Gastrocnemius medialis (tissue), 4 donors: ENCODE measurements at regions of chr5 and their contacts with region 1.

Region 1: DNA sequence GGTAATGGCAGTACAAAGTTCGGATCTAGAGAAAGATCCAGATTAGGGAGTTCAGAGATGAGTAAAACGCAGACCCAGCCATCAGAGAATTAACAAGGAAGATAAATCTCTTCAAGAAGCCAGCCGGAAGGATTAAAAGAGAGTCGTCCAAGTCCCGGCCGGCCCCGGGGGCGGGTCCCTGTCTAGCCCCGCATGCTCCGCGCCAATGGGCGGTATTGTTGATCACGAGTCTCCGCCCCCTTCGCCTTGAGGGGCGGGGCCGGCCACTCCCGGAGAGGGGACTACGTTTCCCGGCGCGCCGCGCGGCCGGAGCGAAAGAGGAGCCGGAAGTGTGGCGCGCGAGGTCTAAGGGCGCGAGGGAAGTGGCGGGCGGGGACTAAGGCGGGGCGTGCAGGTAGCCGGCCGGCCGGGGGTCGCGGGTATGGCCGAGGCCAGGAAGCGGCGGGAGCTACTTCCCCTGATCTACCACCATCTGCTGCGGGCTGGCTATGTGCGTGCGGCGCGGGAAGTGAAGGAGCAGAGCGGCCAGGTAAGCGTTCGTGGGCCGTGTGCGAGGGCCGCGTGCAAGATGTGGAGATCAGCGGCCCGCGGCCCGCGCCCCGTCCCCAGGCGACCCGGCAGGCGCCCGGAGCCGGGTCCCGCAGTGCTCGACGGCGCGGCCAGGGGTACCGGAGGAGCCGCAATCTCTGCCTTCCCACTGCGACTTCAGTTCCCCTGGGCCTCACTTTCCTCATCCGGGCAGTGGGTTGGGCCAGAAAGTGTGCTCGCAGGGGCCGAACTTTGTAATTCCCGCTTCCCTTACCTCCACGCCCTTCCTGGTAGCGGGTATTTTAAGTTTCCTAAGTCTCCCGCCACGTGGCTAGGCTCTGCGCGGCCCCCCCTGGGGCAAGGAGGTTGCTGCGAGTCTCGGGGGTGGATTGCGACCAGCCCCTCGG is at the start of gene TCOF1:
- DNase-seq: peak; percentile 91 to 95
- ATAC-seq: peak; percentile 94
- H3K4me3 ChIP-seq: peak within 1 kb of the TSS; percentile 74 to 92 (median 78)
- H3K27ac ChIP-seq: peak within 1 kb of the TSS; percentile 77 to 85 (median 78)
- H3K4me1 ChIP-seq: peaks cover 12 to 14% of the 10 kb centered on the region in 2 donors
- H3K27me3 ChIP-seq: no peaks in the 10 kb centered on the region
- CTCF ChIP-seq: no peak
- POLR2A ChIP-seq: peak; percentile 60
- total RNA-seq, gene TCOF1: 22.1 to 31.7 (median 27.1) TPM

Region 2: DNA sequence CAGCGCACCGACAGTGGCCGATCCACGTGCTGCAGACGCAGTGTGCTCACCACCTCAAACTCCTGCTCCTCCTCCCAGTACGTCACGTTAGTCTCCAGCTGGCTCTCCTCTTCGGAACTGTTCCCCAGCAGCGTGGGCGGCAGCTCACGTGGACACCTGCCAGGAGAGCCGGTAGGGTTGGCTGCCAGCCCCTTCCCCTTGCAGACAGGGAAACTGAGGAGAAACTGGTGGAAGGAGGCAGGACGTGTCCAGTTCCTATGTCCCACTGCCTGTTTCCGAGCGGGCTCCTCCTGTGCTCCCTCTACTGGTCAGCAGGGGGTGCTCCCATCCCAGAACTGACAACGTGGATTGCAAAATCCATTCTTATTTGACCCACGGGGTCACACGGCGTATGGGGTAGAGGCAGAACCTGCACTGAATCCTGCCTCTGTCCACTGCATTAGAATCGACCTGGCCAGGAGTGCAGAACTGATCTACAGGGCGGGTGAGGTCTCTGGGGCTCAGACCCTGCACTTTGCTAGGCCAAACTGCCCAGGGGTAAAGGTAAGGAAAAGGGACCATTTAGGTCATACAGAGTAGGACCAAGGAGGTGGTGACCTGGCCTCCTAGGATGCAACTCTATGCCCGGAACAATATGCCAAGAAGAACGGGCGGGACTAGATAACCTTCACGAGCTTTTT is 227.6 kb before region 1 on chr5:
- in situ Hi-C with region 1: no loop called
- intact Hi-C with region 1: loop called (anchors 10 kb)
- DNase-seq: peak; percentile 44 to 70
- ATAC-seq: peak; percentile 67 to 91
- H3K4me3 ChIP-seq: peak overlapping the region; percentile 17 to 49 (median 32)
- H3K27ac ChIP-seq: peak overlapping the region in 3 of 4 donors; percentile 25 to 76 (median 30)
- H3K4me1 ChIP-seq: peaks cover 0 to 10% of the 10 kb centered on the region in 2 donors
- H3K27me3 ChIP-seq: no peaks in the 10 kb centered on the region
- CTCF ChIP-seq: peak; percentile 84 to 93 (median 87)
- POLR2A ChIP-seq: no peak

Region 3: DNA sequence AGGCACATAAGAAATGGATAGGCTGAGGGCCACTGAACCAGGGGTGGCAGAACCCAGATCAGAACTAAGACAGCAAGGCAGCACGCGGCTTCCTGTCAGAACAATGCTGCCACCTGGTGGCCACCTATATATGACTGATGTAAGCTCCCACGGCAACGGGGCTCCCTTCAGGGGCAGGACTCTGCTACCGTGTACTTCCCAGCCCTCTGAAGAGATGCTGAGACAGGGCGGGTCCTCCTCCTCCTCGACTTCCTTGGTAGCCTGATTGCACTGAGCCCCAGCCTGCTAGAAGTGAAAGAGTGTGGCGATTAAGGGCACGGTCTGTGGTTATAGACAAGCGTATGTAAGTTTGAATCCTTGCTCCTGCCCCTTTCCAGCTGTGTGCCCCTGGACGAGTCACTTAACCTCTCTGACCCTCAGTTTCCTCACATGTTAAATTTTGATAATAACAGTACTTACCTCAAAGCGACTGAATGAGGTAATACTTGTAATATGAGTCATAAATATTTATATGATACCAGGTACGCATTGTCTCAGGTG is 78.6 kb after region 1 on chr5:
- in situ Hi-C with region 1: no loop called
- intact Hi-C with region 1: loop called (anchors 5 kb)
- DNase-seq: peak; percentile 65 to 82
- ATAC-seq: peak; percentile 86 to 94
- H3K4me3 ChIP-seq: no peak overlapping the region
- H3K27ac ChIP-seq: no peak overlapping the region
- H3K4me1 ChIP-seq: no peaks in the 10 kb centered on the region
- H3K27me3 ChIP-seq: no peaks in the 10 kb centered on the region
- CTCF ChIP-seq: peak; percentile 77 to 91 (median 87)
- POLR2A ChIP-seq: no peak

Region 4: GRCh38 chr5:150458819-150459557 is 101.4 kb after region 1 on chr5:
- in situ Hi-C with region 1: no loop called
- intact Hi-C with region 1: no loop called
- DNase-seq: peak; percentile 29 to 65
- ATAC-seq: peak; percentile 79
- H3K4me3 ChIP-seq: peak overlapping the region in 1 of 4 donors; percentile 29
- H3K27ac ChIP-seq: peak overlapping the region in 3 of 4 donors; percentile 18 to 80 (median 60)
- H3K4me1 ChIP-seq: peaks cover 19 to 23% of the 10 kb centered on the region in 2 donors
- H3K27me3 ChIP-seq: no peaks in the 10 kb centered on the region
- CTCF ChIP-seq: peak; percentile 71 to 96 (median 91)
- POLR2A ChIP-seq: no peak

Region 5: DNA sequence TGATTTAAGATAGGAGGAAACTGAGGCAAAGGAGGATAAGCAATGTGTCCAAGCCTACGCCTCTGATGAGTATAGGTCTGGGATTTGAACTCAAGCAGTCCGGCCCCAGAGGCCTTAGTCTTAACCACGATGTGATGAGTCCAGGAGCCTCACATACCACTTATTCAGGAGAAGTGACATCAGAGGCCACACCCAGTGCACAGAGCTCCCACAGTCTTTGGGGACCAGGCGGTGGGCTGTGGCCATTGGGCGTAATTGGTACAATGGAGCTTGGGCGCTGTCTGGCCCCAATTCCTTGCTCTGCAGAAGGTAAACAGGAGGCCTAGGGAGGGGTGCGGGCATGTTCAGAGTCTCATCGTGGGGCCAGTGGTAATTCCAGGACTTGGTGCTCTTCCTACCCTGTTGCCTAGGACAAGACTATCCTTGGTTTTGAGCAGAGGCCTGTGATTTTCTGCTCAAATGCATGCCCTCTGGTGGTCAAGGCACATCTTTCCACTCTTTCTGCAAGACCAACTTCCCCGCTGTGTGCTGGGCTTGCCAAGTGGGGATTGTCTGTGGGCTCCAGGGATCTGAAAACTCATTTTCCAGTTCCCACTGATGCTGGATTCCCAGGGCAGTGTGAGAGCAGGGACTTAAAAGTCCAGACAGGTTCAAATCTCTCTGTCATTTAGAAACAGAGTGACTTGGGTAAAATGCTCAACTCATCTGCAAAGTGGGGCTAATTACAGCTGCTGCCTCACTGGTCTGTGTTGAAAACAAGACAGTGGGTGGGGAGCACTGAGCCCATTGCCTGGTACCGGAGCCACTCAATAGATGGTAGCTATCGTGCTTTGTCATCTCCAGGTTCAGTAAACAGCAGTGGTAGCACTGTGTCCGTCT is 166.1 kb after region 1 on chr5:
- in situ Hi-C with region 1: no loop called
- intact Hi-C with region 1: no loop called
- DNase-seq: peak in 1 of 2 donors; percentile 46
- ATAC-seq: peak; percentile 42 to 58
- H3K4me3 ChIP-seq: no peak overlapping the region
- H3K27ac ChIP-seq: peak overlapping the region; percentile 21 to 79 (median 75)
- H3K4me1 ChIP-seq: peaks cover 55 to 62% of the 10 kb centered on the region in 2 donors
- H3K27me3 ChIP-seq: no peaks in the 10 kb centered on the region
- CTCF ChIP-seq: peak; percentile 52 to 70 (median 62)
- POLR2A ChIP-seq: no peak

Region 6: DNA sequence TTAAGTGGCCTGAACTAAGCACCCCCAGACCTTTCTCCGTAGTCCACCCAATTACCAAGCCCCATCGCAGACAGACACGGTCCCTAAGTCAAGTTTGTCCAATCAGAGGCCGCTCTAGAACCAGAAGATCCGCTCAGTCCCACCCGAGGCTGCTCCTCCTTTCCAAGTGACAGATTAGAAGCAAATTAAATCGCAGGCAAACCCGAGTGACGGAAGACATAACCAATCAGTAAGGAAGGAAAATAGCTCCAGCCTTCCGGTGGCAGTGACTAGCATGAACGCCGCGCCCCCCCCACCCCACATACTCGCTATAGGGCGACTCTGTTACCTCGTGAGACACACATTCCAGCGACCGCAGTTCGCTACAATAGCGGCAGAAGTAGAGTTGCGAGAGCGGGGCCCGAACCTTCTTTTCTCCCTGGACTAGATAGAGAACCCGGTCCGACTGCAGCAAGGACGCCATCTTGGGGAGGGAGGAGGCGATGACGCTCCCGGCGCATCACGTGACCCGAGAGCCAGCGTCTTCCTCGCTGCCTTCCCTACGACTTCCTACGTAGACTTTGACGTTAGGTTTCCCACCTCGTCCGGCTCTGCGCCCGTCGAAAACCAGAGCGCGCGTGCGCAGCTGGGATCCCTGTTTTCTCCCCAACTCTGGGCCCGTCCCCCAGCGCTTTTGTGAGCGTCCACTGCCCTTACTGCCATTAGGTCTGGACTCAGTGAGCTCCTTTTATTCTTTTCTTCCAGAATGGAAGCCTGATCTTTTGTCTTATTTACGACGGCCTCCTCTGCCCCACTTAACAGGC is 401.1 kb after region 1 on chr5 and contains the start of gene DCTN4:
- in situ Hi-C with region 1: no loop called
- intact Hi-C with region 1: loop called (anchors 5 kb)
- DNase-seq: peak; percentile 97 to 98
- ATAC-seq: peak; percentile 95 to 98
- H3K4me3 ChIP-seq: peak within 1 kb of the TSS; percentile 68 to 75 (median 71)
- H3K27ac ChIP-seq: peak within 1 kb of the TSS; percentile 95 to 97 (median 96)
- H3K4me1 ChIP-seq: peaks cover 16 to 30% of the 10 kb centered on the region in 2 donors
- H3K27me3 ChIP-seq: no peaks in the 10 kb centered on the region
- CTCF ChIP-seq: peak in 2 of 5 experiments; percentile 35 to 56
- POLR2A ChIP-seq: peak; percentile 48 to 71
- total RNA-seq, gene DCTN4: 66.6 to 92.6 (median 72.8) TPM